A549 (cell line): ENCODE measurements at regions of chr14 and their contacts with region 1.

Region 1: DNA sequence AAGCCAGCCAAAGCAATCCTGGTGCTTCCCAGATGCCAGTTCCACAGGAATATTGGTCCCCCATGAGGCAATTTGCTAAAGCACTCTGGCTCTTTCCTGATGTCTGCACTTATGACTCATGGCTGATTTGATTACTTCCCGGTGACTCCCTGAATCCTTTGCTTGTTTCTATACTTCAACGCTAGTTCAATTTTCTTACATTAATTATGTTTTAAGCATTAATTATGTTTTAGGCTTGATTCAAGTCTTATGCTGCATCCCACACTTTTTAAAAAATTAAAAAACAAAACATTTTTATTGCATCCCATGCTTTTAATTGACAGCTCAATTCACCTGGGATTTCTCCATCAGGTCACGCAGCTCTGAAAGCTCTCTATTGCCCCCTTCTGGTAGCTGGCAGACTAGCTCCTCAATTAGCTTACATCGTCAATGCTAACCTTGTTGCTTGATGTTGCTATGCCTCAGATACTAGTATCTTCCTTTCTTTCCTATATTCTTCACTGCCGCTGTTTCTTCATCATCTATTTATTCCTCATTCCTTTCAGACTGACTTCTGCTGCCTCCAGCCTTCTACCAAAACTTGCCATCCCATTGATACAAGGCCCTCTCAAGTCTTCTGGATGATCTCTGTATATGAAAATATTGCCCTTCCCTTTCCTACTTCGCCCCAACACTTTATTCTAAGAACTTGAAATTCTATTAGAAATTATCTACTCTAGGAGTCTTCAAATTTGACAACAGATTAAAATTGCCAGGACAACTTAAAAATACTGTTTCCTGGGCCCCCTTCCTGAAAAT is 32.0 kb downstream of the TSHR start:
- DNase-seq: peak; percentile 64 to 78
- ATAC-seq: peak; percentile 91 to 94
- H3K4me3 ChIP-seq: no peak overlapping the region
- H3K27ac ChIP-seq: no peak overlapping the region
- H3K4me1 ChIP-seq: no peaks in the 10 kb centered on the region
- CTCF ChIP-seq: peak; percentile 85
- EP300 ChIP-seq: no peak
- POLR2A ChIP-seq: no peak
- RAD21 ChIP-seq: peak; percentile 81 to 88

Region 2: DNA sequence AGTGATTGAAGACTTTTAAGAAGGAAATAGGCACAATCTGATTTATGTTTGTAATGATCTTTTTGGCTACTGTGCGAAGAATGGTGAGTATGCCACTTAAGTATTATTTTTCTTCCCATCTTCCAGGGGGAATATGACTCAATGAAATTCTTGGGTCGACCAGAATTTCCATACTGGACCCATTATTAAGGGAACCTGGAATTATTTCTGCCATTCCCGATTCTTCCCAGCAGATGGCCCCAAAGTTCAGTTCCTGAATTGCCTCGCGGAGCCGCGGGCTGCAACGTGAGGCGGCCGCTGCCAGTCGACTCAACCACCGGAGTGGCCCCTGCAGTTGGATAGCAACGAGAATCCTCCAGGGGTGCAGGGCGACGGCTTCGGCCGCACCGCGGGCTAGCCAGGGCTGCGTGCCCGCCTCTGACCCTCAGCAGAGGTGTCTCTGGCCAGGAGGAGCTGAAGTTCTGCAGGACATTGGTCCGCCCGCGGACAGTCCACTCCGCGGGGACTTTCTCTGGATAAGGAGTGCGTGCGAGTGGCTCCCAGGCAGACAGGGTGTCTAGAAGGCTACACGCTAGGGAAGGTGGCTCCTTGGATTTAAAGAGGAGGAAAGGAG is 32.6 kb before region 1 on chr14:
- CTCF ChIA-PET with region 1: interaction called, 57 read pairs
- POLR2A ChIA-PET with region 1: no interaction called
- DNase-seq: peak; percentile 61 to 75
- ATAC-seq: peak; percentile 96
- H3K4me3 ChIP-seq: peak overlapping the region; percentile 52
- H3K27ac ChIP-seq: peak overlapping the region in 1 of 2 experiments; percentile 77; a peak in 4 of 6 replicates
- H3K4me1 ChIP-seq: no peaks in the 10 kb centered on the region
- CTCF ChIP-seq: peak; percentile 80
- EP300 ChIP-seq: no peak
- POLR2A ChIP-seq: no peak
- RAD21 ChIP-seq: peak; percentile 75 to 83

Region 3: GRCh38 chr14:80973931-80974641 is 13.3 kb before region 1 on chr14:
- CTCF ChIA-PET with region 1: interaction called, 10 read pairs
- POLR2A ChIA-PET with region 1: no interaction called
- DNase-seq: no peak
- ATAC-seq: no peak
- H3K4me3 ChIP-seq: no peak overlapping the region
- H3K27ac ChIP-seq: no peak overlapping the region
- H3K4me1 ChIP-seq: no peaks in the 10 kb centered on the region
- CTCF ChIP-seq: no peak
- EP300 ChIP-seq: no peak
- POLR2A ChIP-seq: no peak
- RAD21 ChIP-seq: no peak

Region 4: GRCh38 chr14:81001447-81001846 is 14.0 kb after region 1 on chr14:
- CTCF ChIA-PET with region 1: interaction called, 31 read pairs
- POLR2A ChIA-PET with region 1: no interaction called
- DNase-seq: no peak
- ATAC-seq: no peak
- H3K4me3 ChIP-seq: no peak overlapping the region
- H3K27ac ChIP-seq: no peak overlapping the region
- H3K4me1 ChIP-seq: 0 out of 3 replicates have a peak, but pooled peaks cover 2% of the 10 kb centered on the region
- CTCF ChIP-seq: no peak
- EP300 ChIP-seq: no peak
- POLR2A ChIP-seq: no peak
- RAD21 ChIP-seq: no peak